ENCODE measurements at regions of chr7 and their contacts with region 1.

Region 1: GRCh38 chr7:122316467-122317388 is 12.2 kb upstream of the FEZF1 start:
- DNase-seq: no peak
- ATAC-seq: no peak
- H3K4me3 ChIP-seq: no peak overlapping the region
- H3K4me3 Mint-ChIP-seq: no peak overlapping the region
- H3K27ac ChIP-seq: no peak overlapping the region
- H3K27ac Mint-ChIP-seq: no peak overlapping the region
- H3K4me1 ChIP-seq: no peaks in the 10 kb centered on the region
- H3K4me1 Mint-ChIP-seq: no peaks in the 10 kb centered on the region
- H3K27me3 ChIP-seq: no peaks in the 10 kb centered on the region
- H3K27me3 Mint-ChIP-seq: peaks cover 60 to 67% (median 63%) of the 10 kb centered on the region in 5 donors

Region 2: GRCh38 chr7:122300211-122300932 is 16.4 kb before region 1 on chr7:
- CTCF ChIA-PET with region 1: no interaction called
- POLR2A ChIA-PET with region 1: no interaction called
- intact Hi-C with region 1: loop called in 1 of 2 experiments (anchors 2 kb)
- DNase-seq: no peak
- ATAC-seq: no peak
- H3K4me3 ChIP-seq: no peak overlapping the region
- H3K4me3 Mint-ChIP-seq: no peak overlapping the region
- H3K27ac ChIP-seq: no peak overlapping the region
- H3K27ac Mint-ChIP-seq: no peak overlapping the region
- H3K4me1 ChIP-seq: no peaks in the 10 kb centered on the region
- H3K4me1 Mint-ChIP-seq: peaks cover 0 to 5% (median 0%) of the 10 kb centered on the region in 7 donors
- H3K27me3 ChIP-seq: no peaks in the 10 kb centered on the region
- H3K27me3 Mint-ChIP-seq: peaks cover 64 to 74% (median 69%) of the 10 kb centered on the region in 5 donors

Region 3: GRCh38 chr7:122412883-122413282 is 96.2 kb after region 1 on chr7:
- CTCF ChIA-PET with region 1: no interaction called
- POLR2A ChIA-PET with region 1: no interaction called
- intact Hi-C with region 1: no loop called
- DNase-seq: no peak
- ATAC-seq: no peak
- H3K4me3 ChIP-seq: no peak overlapping the region
- H3K4me3 Mint-ChIP-seq: no peak overlapping the region
- H3K27ac ChIP-seq: no peak overlapping the region
- H3K27ac Mint-ChIP-seq: no peak overlapping the region
- H3K4me1 ChIP-seq: no peaks in the 10 kb centered on the region
- H3K4me1 Mint-ChIP-seq: no peaks in the 10 kb centered on the region
- H3K27me3 ChIP-seq: no peaks in the 10 kb centered on the region
- H3K27me3 Mint-ChIP-seq: no peaks in the 10 kb centered on the region